H1 (cell line): ENCODE measurements at regions of chrX and their contacts with region 1.

Region 1: GRCh38 chrX:132710656-132711155 is 221.9 kb upstream of the MBNL3 start:
- DNase-seq: no peak
- H3K4me3 ChIP-seq: no peak overlapping the region
- H3K27ac ChIP-seq: no peak overlapping the region
- H3K4me1 ChIP-seq: no peaks in the 10 kb centered on the region
- H3K27me3 ChIP-seq: no peaks in the 10 kb centered on the region
- CTCF ChIP-seq: no peak
- EP300 ChIP-seq: no peak
- POLR2A ChIP-seq: no peak
- RAD21 ChIP-seq: no peak

Region 2: DNA sequence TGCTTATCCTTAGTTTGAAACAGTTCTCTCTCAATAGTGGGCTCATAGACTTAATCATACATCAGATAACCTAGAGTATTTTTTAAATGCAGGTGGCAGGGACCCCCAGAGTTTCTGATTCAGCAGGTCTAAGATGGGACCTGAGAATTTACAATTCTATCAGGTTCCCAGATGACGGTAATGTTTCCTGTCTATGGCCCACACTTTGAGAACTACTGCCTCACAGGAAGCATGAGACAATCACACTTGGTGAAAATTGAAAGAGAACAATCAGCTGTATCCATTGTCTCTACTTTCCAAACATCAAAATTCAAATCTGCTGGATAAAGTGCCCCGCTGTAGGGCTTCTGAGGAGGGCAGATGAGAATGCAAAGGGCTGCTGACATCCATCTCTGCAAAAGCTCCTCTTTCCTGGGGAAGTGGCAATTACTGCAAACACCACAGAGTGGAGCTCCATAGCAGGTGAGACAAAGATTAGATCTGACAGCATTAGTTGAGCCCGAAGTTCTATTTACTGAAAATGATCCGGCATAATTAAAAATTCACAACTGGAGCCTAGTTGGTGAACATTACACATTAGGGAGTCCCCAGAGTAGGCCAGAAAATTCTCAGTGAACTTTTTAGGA is 34.0 kb before region 1 on chrX:
- CTCF ChIA-PET with region 1: interaction called, 16 read pairs
- POLR2A ChIA-PET with region 1: no interaction called
- DNase-seq: no peak
- H3K4me3 ChIP-seq: no peak overlapping the region
- H3K27ac ChIP-seq: no peak overlapping the region
- H3K4me1 ChIP-seq: peaks cover 0 to 2% (median 0%) of the 10 kb centered on the region in 4 experiments; a peak in 3 of 7 replicates
- H3K27me3 ChIP-seq: peaks cover 11 to 43% (median 32%) of the 10 kb centered on the region in 4 experiments
- CTCF ChIP-seq: peak in 2 of 3 experiments; percentile 35 to 45; a peak in 2 of 4 replicates
- EP300 ChIP-seq: no peak
- POLR2A ChIP-seq: no peak
- RAD21 ChIP-seq: peak; percentile 49 to 61